Astrocyte of the cerebellum (primary cell): ENCODE measurements at regions of chr14 and their contacts with region 1.

Region 1: DNA sequence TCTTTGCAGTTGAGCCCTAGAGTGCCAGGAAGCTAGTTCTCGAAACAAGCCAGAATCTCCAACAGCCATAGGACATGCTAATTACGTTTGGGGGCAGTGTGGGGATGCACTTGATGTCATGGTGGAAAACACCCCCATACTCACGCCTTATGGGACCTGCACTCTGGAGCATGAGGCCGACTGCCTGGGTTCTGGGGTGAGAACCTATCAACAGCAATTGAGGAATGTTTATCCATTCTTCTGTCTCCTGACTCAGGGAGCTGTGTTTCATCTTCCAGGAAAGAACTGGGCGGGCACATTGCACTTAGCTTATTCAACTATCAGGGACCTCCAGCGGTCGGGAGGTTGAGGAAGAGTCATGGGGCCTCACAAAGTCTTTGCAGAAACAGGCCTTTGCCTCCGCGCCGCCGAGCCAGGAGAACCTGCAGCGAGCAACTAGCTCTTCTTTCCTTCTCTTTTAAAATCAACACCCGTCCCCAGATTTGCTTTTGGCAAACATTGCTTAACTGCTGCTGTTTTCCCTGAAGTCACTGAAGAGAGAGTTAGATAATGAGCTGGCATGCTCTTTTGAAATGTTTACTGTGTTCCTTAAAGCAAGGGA is 226.1 kb upstream of the DIO3 start:
- DNase-seq: no peak
- H3K4me3 ChIP-seq: no peak overlapping the region
- CTCF ChIP-seq: no peak

Region 2: GRCh38 chr14:101520621-101521472 is 185.7 kb after region 1 on chr14:
- in situ Hi-C with region 1: loop called (anchors 25 kb)
- DNase-seq: no peak
- H3K4me3 ChIP-seq: no peak overlapping the region
- CTCF ChIP-seq: no peak